Ovary (tissue), 10 donors: ENCODE measurements at regions of chr19 and their contacts with region 1.

Region 1: DNA sequence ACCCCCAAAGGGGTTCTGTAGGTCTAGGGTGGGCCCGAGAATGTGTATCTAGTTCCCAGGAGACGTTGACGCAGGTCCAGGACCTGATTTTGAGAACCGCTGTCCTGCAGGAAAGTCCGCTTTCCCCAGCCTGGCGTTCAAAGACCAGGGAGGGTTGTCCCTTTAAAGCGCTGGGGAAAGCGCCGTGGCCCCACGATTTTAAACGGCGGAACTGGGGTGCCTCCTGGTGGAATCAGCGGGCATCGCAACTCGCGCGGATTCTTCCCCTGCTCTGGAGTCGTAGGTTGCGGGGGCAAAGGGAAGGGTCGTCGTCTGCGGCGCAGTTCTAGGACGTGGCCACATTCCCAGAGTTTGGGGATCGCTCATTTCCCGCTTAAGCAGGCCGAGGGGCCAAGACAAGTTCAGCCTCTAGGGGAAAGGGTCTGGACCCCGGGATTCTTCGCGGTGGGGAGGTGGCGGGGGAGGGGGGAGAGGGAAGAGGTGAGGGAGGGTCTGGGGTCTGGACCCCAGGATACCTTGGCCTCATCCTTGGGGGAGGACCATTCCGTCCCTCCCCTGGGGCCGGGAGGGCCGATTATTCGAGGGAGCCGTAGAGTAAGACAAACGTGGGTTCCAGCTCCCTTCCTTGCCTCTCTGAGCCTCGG is 7.7 kb downstream of the PNMA8B start:
- DNase-seq: peak; percentile 73 to 91 (median 87)
- H3K4me3 ChIP-seq: peak overlapping the region; percentile 27
- H3K27ac ChIP-seq: no peak overlapping the region
- H3K4me1 ChIP-seq: peaks cover 18% of the 10 kb centered on the region
- H3K27me3 ChIP-seq: no peaks in the 10 kb centered on the region
- CTCF ChIP-seq: peak; percentile 86 to 99 (median 99)
- EP300 ChIP-seq: no peak
- POLR2A ChIP-seq: peak; percentile 18

Region 2: GRCh38 chr19:44723952-44724319 is 1764.0 kb before region 1 on chr19:
- intact Hi-C with region 1: loop called in 1 of 4 experiments (anchors 10 kb)
- DNase-seq: peak; percentile 71 to 88 (median 84)
- H3K4me3 ChIP-seq: no peak overlapping the region
- H3K27ac ChIP-seq: no peak overlapping the region
- H3K4me1 ChIP-seq: peaks cover 12% of the 10 kb centered on the region
- H3K27me3 ChIP-seq: no peaks in the 10 kb centered on the region
- CTCF ChIP-seq: peak; percentile 87 to 95 (median 95)
- EP300 ChIP-seq: no peak
- POLR2A ChIP-seq: no peak

Region 3: DNA sequence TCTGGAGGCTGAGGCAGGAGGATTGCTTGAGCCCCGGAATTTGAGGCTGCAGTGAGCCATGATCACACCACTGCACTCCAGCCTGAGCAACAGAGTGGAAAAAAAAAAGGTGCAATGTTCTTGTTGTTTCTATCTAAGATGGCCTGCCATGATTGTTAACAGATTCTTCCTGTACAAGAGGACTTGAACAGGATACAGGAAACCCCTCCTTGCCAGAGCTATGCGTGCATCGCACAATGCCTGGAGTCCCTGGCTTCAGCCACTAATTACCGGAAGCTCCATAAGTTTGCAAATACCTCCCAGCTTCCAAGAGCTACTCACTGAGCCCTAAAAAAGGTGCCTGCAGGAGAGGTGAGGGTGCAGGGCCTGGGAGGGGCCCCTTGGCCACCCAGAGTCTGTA is 204.2 kb before region 1 on chr19:
- intact Hi-C with region 1: loop called in 1 of 4 experiments (anchors 5 kb)
- DNase-seq: no peak
- H3K4me3 ChIP-seq: no peak overlapping the region
- H3K27ac ChIP-seq: no peak overlapping the region
- H3K4me1 ChIP-seq: no peaks in the 10 kb centered on the region
- H3K27me3 ChIP-seq: no peaks in the 10 kb centered on the region
- CTCF ChIP-seq: no peak
- EP300 ChIP-seq: no peak
- POLR2A ChIP-seq: no peak

Region 4: DNA sequence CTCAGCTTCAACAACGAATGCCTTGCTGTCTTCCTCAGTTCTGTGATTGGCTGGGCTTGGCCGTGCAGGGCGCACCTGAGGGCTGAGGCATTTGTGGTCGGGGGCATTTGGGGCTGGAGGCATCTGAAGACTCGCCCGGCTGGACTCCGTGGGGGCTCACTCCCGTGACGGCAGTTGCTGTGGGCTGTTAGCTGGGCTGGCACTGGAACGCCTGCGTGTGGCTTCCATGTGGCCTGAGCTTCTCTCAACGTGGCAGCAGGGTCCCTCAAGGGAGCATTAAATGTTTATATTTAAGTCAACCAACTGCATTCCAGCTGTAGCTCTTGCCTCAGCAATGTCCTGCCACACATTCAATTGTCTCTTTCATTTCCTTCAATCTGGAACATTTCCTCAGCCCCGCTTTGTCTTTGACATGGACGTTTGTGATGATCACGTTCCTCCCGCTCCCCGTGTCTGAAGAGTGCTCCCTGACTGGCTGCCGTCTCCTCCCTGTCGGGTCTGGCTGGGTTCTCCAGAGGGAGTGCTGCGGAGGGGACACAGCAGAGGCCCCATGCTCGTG is 95.6 kb before region 1 on chr19:
- intact Hi-C with region 1: loop called in 2 of 4 experiments (anchors 2 to 5 kb)
- DNase-seq: peak in 3 of 5 donors; percentile 21 to 44 (median 21)
- H3K4me3 ChIP-seq: no peak overlapping the region
- H3K27ac ChIP-seq: peak overlapping the region in 1 of 2 donors; percentile 42
- H3K4me1 ChIP-seq: peaks cover 2% of the 10 kb centered on the region
- H3K27me3 ChIP-seq: no peaks in the 10 kb centered on the region
- CTCF ChIP-seq: no peak
- EP300 ChIP-seq: no peak
- POLR2A ChIP-seq: no peak

Region 5: GRCh38 chr19:46404055-46404752 is 83.7 kb before region 1 on chr19:
- intact Hi-C with region 1: loop called (anchors 2 to 5 kb)
- DNase-seq: peak; percentile 64 to 82 (median 74)
- H3K4me3 ChIP-seq: peak overlapping the region; percentile 41
- H3K27ac ChIP-seq: peak overlapping the region; percentile 74 to 78
- H3K4me1 ChIP-seq: peaks cover 20% of the 10 kb centered on the region
- H3K27me3 ChIP-seq: no peaks in the 10 kb centered on the region
- CTCF ChIP-seq: no peak
- EP300 ChIP-seq: no peak
- POLR2A ChIP-seq: peak; percentile 26

Region 6: GRCh38 chr19:46586303-46587001 is 98.5 kb after region 1 on chr19:
- intact Hi-C with region 1: no loop called
- DNase-seq: no peak
- H3K4me3 ChIP-seq: no peak overlapping the region
- H3K27ac ChIP-seq: no peak overlapping the region
- H3K4me1 ChIP-seq: no peaks in the 10 kb centered on the region
- H3K27me3 ChIP-seq: no peaks in the 10 kb centered on the region
- CTCF ChIP-seq: no peak
- EP300 ChIP-seq: no peak
- POLR2A ChIP-seq: no peak

Region 7: GRCh38 chr19:46803555-46803954 is 315.6 kb after region 1 on chr19:
- intact Hi-C with region 1: no loop called
- DNase-seq: no peak
- H3K4me3 ChIP-seq: no peak overlapping the region
- H3K27ac ChIP-seq: no peak overlapping the region
- H3K4me1 ChIP-seq: no peaks in the 10 kb centered on the region
- H3K27me3 ChIP-seq: no peaks in the 10 kb centered on the region
- CTCF ChIP-seq: no peak
- EP300 ChIP-seq: no peak
- POLR2A ChIP-seq: no peak